ENCODE measurements at regions of chr10 and their contacts with region 1.

Region 1: DNA sequence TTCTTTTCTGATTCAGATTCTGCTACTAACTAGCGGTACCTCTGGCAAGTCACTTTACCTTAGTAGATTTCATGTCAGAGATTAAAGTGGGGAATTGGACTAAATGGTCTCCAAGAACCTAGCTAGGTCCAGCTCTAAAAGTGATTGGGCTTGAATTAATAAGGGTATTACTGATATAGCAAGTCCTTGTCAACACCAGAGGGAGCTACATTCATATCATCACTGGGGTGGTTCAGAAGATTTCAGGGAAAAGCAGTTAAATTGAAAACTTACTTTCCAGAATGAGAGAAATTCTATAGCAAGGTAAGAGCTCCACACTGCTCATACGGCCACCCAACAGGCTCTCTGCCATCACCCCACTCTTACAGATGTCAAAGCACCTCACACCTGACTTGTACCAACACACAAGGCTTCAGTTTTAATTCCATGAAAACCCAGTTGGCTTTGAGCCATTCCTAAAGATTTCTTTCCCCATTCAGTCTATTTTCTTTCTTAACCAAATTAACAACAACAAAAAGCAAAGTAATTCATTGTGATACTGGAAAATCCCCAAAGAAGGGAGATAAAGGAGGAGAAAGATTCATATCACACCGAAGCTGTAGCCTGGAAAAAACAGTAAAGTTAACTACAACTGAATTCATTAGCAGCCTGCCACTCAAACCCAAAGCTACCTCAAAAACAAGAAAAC is 38.0 kb upstream of the SPOCK2 start:
- DNase-seq: peak; percentile 65
- H3K4me3 ChIP-seq: no peak overlapping the region
- H3K27ac ChIP-seq: no peak overlapping the region
- H3K4me1 ChIP-seq: no peaks in the 10 kb centered on the region
- H3K27me3 ChIP-seq: no peaks in the 10 kb centered on the region
- CTCF ChIP-seq: peak; percentile 39
- POLR2A ChIP-seq: no peak

Region 2: GRCh38 chr10:72114706-72115450 is 11.4 kb before region 1 on chr10:
- CTCF ChIA-PET with region 1: interaction called, 16 read pairs
- POLR2A ChIA-PET with region 1: interaction called, 3 read pairs
- dilution Hi-C with region 1: no loop called
- intact Hi-C with region 1: no loop called
- DNase-seq: no peak
- H3K4me3 ChIP-seq: no peak overlapping the region
- H3K27ac ChIP-seq: no peak overlapping the region
- H3K4me1 ChIP-seq: no peaks in the 10 kb centered on the region
- H3K27me3 ChIP-seq: no peaks in the 10 kb centered on the region
- CTCF ChIP-seq: no peak
- POLR2A ChIP-seq: no peak

Region 3: DNA sequence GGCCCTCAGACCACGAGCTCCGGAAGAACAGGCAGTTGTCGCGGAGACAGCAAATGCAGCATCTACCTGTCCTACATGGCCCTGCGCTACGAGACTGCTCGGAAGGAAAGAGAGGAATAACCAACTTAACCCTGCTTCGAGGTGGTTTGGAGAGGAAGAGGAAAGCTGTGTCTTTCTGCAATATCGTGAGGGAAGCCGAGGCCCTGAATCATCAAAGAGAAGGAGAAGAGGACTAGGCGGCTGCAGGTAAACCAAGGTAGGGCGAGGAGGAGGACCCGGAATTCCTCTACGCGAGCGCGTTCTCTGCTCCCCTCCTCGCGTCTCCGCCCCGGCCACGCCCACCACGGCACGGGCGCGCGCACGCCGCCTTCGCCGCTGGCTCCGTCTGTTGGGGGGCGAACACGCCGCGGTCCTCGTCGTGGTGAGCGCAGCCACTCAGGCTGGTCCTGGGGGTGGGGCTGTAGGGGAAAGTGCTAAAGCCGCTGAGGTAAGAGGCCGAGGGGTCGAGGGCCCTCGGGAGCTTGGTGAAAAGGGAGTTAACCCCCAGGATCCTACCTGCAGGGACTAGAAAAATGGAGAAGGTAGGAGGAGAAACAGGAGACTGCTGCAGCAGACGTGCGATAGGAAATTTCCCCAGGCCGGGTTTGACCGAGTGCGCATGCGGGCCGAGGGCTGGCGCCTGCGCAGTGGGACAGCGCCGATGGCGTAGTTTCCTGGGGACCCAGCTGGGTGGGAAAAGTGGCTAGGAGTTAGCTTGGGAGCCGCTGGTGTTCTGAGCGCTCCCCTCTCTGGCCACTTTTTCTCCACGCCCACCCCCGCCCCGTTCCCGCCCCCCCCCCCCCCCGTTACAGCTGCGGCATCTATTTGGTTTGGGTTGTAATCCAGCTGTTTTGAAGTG is 89.6 kb after region 1 on chr10 and contains the starts of genes ANAPC16 and ASCC1:
- CTCF ChIA-PET with region 1: interaction called, 193 read pairs
- POLR2A ChIA-PET with region 1: interaction called, 6 read pairs
- dilution Hi-C with region 1: no loop called
- intact Hi-C with region 1: no loop called
- DNase-seq: peak; percentile 95
- H3K4me3 ChIP-seq: peak within 1 kb of the TSS; percentile 72 to 94 (median 84)
- H3K27ac ChIP-seq: peak within 1 kb of the TSS; percentile 85
- H3K4me1 ChIP-seq: peaks cover 4% of the 10 kb centered on the region
- H3K27me3 ChIP-seq: no peaks in the 10 kb centered on the region
- CTCF ChIP-seq: no peak
- POLR2A ChIP-seq: peak; percentile 94
- total RNA-seq, gene ANAPC16: 44.2 and 44.4 TPM in 2 replicates
- total RNA-seq, gene ASCC1: 24.9 and 28.2 TPM in 2 replicates

Region 4: DNA sequence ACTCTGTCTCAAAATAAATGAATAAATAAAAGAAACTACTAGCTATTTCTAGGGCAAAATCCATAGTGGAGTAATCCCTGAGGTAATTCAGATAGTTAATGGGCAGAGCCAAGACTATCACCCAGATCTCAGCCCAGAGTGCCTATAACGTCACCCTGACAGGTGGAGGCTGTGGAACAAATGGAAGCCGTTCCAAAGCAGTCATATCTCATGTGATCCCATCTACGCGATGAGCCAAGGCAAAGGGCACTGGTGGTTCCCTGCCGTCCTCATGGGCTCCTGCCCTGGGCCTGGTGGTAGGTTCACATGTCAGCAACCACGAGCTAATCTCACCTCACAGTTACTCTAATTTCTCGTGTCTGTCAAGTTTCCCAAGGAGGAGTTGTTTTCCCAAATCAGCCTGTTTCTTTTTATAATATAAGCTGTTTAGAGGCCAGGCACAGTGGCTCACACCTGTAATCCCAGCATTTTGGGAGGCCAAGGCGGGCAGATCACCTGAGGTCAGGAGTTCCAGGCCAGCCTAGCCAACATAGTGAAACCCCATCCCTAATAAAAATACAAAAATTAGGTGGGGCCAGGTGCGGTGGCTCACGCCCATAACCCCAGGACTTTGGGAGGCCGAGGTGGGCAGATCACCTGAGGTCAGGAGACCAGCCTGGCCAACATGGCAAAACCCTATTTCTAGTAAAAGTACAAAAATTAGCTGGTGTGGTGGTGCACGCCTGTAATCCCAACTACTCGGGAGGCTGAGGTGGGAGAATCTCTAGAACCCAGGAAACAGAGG is 112.3 kb after region 1 on chr10:
- CTCF ChIA-PET with region 1: interaction called, 11 read pairs
- POLR2A ChIA-PET with region 1: no interaction called
- dilution Hi-C with region 1: no loop called
- intact Hi-C with region 1: no loop called
- DNase-seq: no peak
- H3K4me3 ChIP-seq: no peak overlapping the region
- H3K27ac ChIP-seq: no peak overlapping the region
- H3K4me1 ChIP-seq: peaks cover 11% of the 10 kb centered on the region
- H3K27me3 ChIP-seq: no peaks in the 10 kb centered on the region
- CTCF ChIP-seq: no peak
- POLR2A ChIP-seq: no peak

Region 5: GRCh38 chr10:72273410-72274212 is 147.3 kb after region 1 on chr10 and contains the start of gene DDIT4:
- CTCF ChIA-PET with region 1: interaction called, 31 read pairs
- POLR2A ChIA-PET with region 1: no interaction called
- dilution Hi-C with region 1: no loop called
- intact Hi-C with region 1: loop called (anchors 1 kb)
- DNase-seq: peak; percentile 99
- H3K4me3 ChIP-seq: peak within 1 kb of the TSS; percentile 37 to 68 (median 66)
- H3K27ac ChIP-seq: peak within 1 kb of the TSS; percentile 59
- H3K4me1 ChIP-seq: peaks cover 23% of the 10 kb centered on the region
- H3K27me3 ChIP-seq: no peaks in the 10 kb centered on the region
- CTCF ChIP-seq: no peak
- POLR2A ChIP-seq: peak; percentile 100
- total RNA-seq, gene DDIT4: 53.0 and 60.4 TPM in 2 replicates

Region 6: GRCh38 chr10:72337020-72337629 is 210.8 kb after region 1 on chr10:
- CTCF ChIA-PET with region 1: interaction called, 144 read pairs
- POLR2A ChIA-PET with region 1: interaction called, 3 read pairs
- dilution Hi-C with region 1: no loop called
- intact Hi-C with region 1: loop called (anchors 1 kb)
- DNase-seq: peak; percentile 72
- H3K4me3 ChIP-seq: no peak overlapping the region
- H3K27ac ChIP-seq: peak overlapping the region; percentile 97
- H3K4me1 ChIP-seq: peaks cover 50% of the 10 kb centered on the region
- H3K27me3 ChIP-seq: no peaks in the 10 kb centered on the region
- CTCF ChIP-seq: peak; percentile 97 to 98
- POLR2A ChIP-seq: no peak

Measured in endothelial cell of umbilical vein (primary cell).